ENCODE measurements at regions of chr4 and their contacts with region 1.

Region 1: DNA sequence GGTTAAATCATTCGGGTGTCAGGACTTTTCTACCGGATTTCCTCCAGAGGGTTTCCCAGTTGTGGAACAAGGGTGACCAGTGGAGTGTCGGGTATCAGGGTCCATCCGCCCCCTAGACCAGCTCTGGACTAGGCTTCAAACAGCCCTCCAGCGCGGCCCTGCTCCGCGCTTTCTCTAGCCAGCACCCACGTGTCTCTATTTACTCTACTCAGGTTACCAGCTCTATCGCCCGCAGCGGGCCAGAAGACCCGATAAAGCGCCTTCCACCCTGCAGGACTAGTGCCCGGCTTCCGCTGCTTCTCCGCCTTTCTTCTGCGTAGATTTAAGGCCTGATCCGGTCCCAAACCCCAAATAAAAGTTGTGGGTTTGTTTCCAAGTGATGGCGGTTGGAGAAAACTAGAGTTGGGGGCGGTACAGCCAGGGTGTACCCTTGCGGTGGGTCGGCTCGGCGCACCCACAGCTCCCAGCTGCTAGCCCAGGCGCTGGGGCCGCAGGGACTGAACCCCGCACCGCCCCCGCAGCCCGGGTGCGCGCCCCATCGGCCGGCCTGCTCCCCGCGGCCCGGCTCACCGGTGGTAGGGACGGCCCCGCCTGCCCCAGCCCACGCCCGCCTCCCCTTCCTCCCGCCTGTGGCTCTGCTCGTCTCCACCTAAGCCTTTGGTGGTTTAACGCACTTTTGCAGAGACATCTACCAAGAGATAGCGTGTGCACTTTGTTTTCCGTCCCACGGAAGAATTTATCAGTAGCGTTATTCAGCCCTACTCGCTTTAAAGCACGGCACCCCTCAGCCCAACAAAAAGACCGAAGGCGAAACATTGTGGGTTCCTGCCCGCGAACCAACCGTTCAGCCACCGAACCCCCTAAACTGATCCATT is 2.1 kb downstream of the LEF1 start:
- DNase-seq: peak; percentile 79
- H3K4me3 ChIP-seq: peak overlapping the region; percentile 83
- H3K27ac ChIP-seq: peak overlapping the region; percentile 89
- H3K4me1 ChIP-seq: peaks cover 52% of the 10 kb centered on the region
- CTCF ChIP-seq: peak; percentile 38; the same call in 1 of the 2 replicates

Region 2: GRCh38 chr4:107989537-107990386 is 176.9 kb before region 1 on chr4 and contains the start of gene HADH:
- CTCF ChIA-PET with region 1: no interaction called
- POLR2A ChIA-PET with region 1: interaction called, 4 read pairs
- intact Hi-C with region 1: loop called (anchors 2 kb)
- DNase-seq: peak; percentile 96
- H3K4me3 ChIP-seq: peak within 1 kb of the TSS; percentile 99
- H3K27ac ChIP-seq: peak within 1 kb of the TSS; percentile 63
- H3K4me1 ChIP-seq: peaks cover 46% of the 10 kb centered on the region
- CTCF ChIP-seq: no peak
- total RNA-seq, gene HADH: 31.2 and 32.3 TPM in 2 replicates